Heart right ventricle (tissue), 16 donors: ENCODE measurements at regions of chr4 and their contacts with region 1.

Region 1: GRCh38 chr4:104490770-104491480 is 3.8 kb downstream of the CXXC4 start:
- DNase-seq: peak; percentile 81 to 85
- ATAC-seq: peak; percentile 30 to 74 (median 46)
- H3K4me3 ChIP-seq: peak overlapping the region; percentile 36 to 77 (median 60)
- H3K27ac ChIP-seq: peak overlapping the region in 9 of 10 donors; percentile 4 to 85 (median 79)
- H3K4me1 ChIP-seq: peaks cover 0 to 32% (median 18%) of the 10 kb centered on the region in 9 donors
- H3K27me3 ChIP-seq: peaks cover 0 to 71% (median 0%) of the 10 kb centered on the region in 7 donors
- CTCF ChIP-seq: no peak

Region 2: GRCh38 chr4:104436542-104436941 is 54.4 kb before region 1 on chr4:
- intact Hi-C with region 1: no loop called
- DNase-seq: no peak
- ATAC-seq: peak in 5 of 8 donors; percentile 37 to 92 (median 58)
- H3K4me3 ChIP-seq: no peak overlapping the region
- H3K27ac ChIP-seq: no peak overlapping the region
- H3K4me1 ChIP-seq: no peaks in the 10 kb centered on the region
- H3K27me3 ChIP-seq: no peaks in the 10 kb centered on the region
- CTCF ChIP-seq: no peak

Region 3: GRCh38 chr4:104591510-104591911 is 100.6 kb after region 1 on chr4:
- intact Hi-C with region 1: loop called in 1 of 10 experiments (anchors 5 kb)
- DNase-seq: peak; percentile 19 to 45
- ATAC-seq: peak; percentile 46 to 89 (median 77)
- H3K4me3 ChIP-seq: no peak overlapping the region
- H3K27ac ChIP-seq: no peak overlapping the region
- H3K4me1 ChIP-seq: peaks cover 0 to 23% (median 6%) of the 10 kb centered on the region in 9 donors
- H3K27me3 ChIP-seq: no peaks in the 10 kb centered on the region
- CTCF ChIP-seq: no peak

Region 4: GRCh38 chr4:104630272-104630671 is 139.3 kb after region 1 on chr4:
- intact Hi-C with region 1: no loop called
- DNase-seq: no peak
- ATAC-seq: no peak
- H3K4me3 ChIP-seq: no peak overlapping the region
- H3K27ac ChIP-seq: no peak overlapping the region
- H3K4me1 ChIP-seq: no peaks in the 10 kb centered on the region
- H3K27me3 ChIP-seq: no peaks in the 10 kb centered on the region
- CTCF ChIP-seq: no peak

Region 5: DNA sequence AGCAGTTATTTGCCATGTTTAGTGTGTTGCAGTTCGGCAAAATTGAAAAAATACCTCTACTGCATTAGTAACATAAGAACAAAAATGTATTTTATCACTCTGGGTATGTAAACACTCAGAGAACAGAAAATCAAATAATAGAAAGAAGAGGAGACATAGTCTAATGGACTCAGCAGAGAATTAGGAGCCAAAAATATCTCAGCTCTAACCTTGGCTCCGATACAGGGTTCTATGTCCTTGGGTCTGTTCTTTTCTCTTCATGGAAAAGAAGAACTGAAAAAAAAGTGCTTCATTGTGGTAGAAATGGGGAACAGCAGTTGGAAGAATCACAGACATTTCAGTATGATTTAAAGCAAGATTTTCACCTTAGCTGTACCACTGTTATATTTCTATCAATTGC is 244.2 kb after region 1 on chr4:
- intact Hi-C with region 1: loop called in 1 of 10 experiments (anchors 10 kb)
- DNase-seq: no peak
- ATAC-seq: peak in 6 of 8 donors; percentile 50 to 84 (median 68)
- H3K4me3 ChIP-seq: no peak overlapping the region
- H3K27ac ChIP-seq: peak overlapping the region in 5 of 10 donors; percentile 23 to 54 (median 48)
- H3K4me1 ChIP-seq: peaks cover 0 to 35% (median 9%) of the 10 kb centered on the region in 9 donors
- H3K27me3 ChIP-seq: no peaks in the 10 kb centered on the region
- CTCF ChIP-seq: no peak